AG04450 (cell line): ENCODE measurements at regions of chr10 and their contacts with region 1.

Region 1: GRCh38 chr10:125048101-125048864 is 106.4 kb downstream of the ZRANB1 start:
- DNase-seq: peak; percentile 76
- H3K4me3 ChIP-seq: no peak overlapping the region
- H3K27ac ChIP-seq: peak overlapping the region; percentile 52
- H3K27me3 ChIP-seq: no peaks in the 10 kb centered on the region
- CTCF ChIP-seq: peak; percentile 99

Region 2: GRCh38 chr10:125000366-125001312 is 47.6 kb before region 1 on chr10:
- CTCF ChIA-PET with region 1: interaction called, 16 read pairs
- POLR2A ChIA-PET with region 1: no interaction called
- DNase-seq: no peak
- H3K4me3 ChIP-seq: no peak overlapping the region
- H3K27ac ChIP-seq: peak overlapping the region; percentile 77
- H3K27me3 ChIP-seq: no peaks in the 10 kb centered on the region
- CTCF ChIP-seq: peak; percentile 20; the same call in 1 of the 2 replicates

Region 3: GRCh38 chr10:125027871-125028869 is 20.1 kb before region 1 on chr10:
- CTCF ChIA-PET with region 1: interaction called, 34 read pairs
- POLR2A ChIA-PET with region 1: no interaction called
- DNase-seq: no peak
- H3K4me3 ChIP-seq: no peak overlapping the region
- H3K27ac ChIP-seq: no peak overlapping the region
- H3K27me3 ChIP-seq: no peaks in the 10 kb centered on the region
- CTCF ChIP-seq: no peak

Region 4: GRCh38 chr10:125068406-125068805 is 20.1 kb after region 1 on chr10:
- CTCF ChIA-PET with region 1: interaction called, 86 read pairs
- POLR2A ChIA-PET with region 1: no interaction called
- DNase-seq: no peak
- H3K4me3 ChIP-seq: no peak overlapping the region
- H3K27ac ChIP-seq: no peak overlapping the region
- H3K27me3 ChIP-seq: no peaks in the 10 kb centered on the region
- CTCF ChIP-seq: no peak

Region 5: DNA sequence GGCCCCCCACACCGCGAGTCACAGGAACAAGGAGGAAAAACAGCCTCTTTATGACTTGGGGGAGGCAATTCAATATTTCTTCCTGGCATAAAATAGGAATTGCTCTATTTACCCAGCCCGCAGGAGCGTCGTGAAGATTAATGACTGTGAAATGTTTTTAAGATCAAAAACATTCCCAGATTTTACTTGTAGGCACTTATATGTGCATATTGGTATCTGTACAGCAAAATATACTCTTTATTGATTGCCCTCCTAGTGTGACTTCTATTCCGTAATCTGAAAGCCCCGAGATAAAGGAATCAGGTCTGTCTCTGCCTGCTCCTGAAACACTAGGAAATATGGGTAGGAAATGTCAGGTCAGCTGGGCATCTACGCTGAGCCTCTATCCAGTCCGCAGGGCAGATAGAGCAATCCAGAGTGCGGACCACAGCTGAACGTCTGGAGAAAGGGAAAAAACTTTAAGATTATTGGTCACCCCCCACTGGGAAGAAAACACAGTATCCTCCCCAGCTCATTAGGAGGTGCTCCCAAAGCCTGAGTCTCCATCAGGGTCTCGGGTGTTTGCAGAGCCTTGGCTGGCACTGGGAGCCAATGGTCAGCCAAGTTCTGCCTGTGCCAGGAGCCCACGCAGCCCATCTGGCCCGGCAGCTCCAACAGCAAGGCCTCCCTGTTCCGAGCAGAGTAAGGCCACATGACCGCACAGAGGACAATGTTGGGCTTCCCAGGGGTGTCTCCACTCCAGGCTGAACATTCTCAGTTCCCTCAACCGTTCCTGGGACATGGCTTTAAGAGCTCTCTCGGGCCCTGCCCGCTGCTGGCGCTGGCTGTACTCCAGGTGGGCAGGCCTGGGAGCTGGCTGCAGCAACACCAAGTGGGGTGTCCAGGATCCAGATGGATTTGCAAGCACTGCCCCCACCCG is 104.4 kb after region 1 on chr10:
- CTCF ChIA-PET with region 1: interaction called, 21 read pairs
- POLR2A ChIA-PET with region 1: interaction called, 3 read pairs
- DNase-seq: no peak
- H3K4me3 ChIP-seq: no peak overlapping the region
- H3K27ac ChIP-seq: no peak overlapping the region
- H3K27me3 ChIP-seq: no peaks in the 10 kb centered on the region
- CTCF ChIP-seq: no peak

Region 6: GRCh38 chr10:125283191-125283835 is 235.0 kb after region 1 on chr10:
- CTCF ChIA-PET with region 1: no interaction called
- POLR2A ChIA-PET with region 1: no interaction called
- DNase-seq: no peak
- H3K4me3 ChIP-seq: no peak overlapping the region
- H3K27ac ChIP-seq: no peak overlapping the region
- H3K27me3 ChIP-seq: peaks cover 12% of the 10 kb centered on the region
- CTCF ChIP-seq: no peak

Region 7: GRCh38 chr10:125343118-125343925 is 295.0 kb after region 1 on chr10:
- CTCF ChIA-PET with region 1: interaction called, 21 read pairs
- POLR2A ChIA-PET with region 1: no interaction called
- DNase-seq: no peak
- H3K4me3 ChIP-seq: no peak overlapping the region
- H3K27ac ChIP-seq: no peak overlapping the region
- H3K27me3 ChIP-seq: peaks cover 2% of the 10 kb centered on the region
- CTCF ChIP-seq: peak; percentile 68